ENCODE measurements at regions of chr14 and their contacts with region 1.

Region 1: GRCh38 chr14:51979088-51979709 is 10.1 kb upstream of the RTRAF start:
- DNase-seq: peak; percentile 80
- H3K4me3 Mint-ChIP-seq: no peak overlapping the region
- H3K27ac Mint-ChIP-seq: no peak overlapping the region
- H3K4me1 Mint-ChIP-seq: no peaks in the 10 kb centered on the region
- H3K27me3 Mint-ChIP-seq: peaks cover 29% of the 10 kb centered on the region
- CTCF ChIP-seq: peak; percentile 86

Region 2: GRCh38 chr14:51283402-51284085 is 695.7 kb before region 1 on chr14:
- CTCF ChIA-PET with region 1: interaction called, 29 read pairs
- POLR2A ChIA-PET with region 1: no interaction called
- intact Hi-C with region 1: loop called (anchors 1 kb)
- DNase-seq: peak; percentile 84
- H3K4me3 Mint-ChIP-seq: no peak overlapping the region
- H3K27ac Mint-ChIP-seq: no peak overlapping the region
- H3K4me1 Mint-ChIP-seq: peaks cover 12% of the 10 kb centered on the region
- H3K27me3 Mint-ChIP-seq: no peaks in the 10 kb centered on the region
- CTCF ChIP-seq: peak; percentile 80

Region 3: DNA sequence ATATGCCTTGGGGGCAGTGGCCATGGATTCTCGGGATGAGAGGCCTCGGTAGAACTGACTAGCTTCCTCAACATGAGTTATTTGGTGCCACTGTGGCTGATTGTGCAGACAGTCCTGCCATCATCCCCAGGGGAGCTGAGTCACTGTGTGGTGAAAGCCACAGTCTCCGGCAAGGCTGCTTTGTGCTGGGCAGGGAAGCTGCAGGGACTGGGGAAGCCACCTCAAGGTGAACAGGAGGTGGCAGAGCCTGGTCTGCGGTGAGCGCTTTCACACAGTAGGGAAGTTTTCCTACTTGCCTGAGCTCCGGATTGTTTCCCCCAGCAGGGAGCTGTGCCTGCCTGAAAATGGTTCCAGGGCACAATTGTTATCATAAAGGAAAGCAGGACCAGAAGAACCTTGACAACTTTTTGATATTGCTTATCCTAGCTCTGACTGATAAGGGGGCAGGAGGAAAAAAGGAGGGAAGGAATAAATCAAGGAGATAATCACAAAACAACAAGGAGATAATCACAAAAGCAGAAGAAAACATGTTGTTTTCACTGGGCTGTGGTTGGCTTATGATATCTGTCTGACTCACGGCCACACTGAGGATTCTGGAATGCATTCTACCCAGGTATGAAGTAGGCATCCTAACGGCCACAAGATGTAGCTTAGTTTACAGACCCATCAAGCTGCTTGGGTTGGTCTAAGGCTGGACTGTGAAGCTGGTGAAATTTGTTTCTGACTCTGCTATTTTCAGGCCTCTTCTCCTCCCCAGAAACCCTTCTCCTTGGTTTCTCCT is 151.0 kb before region 1 on chr14:
- CTCF ChIA-PET with region 1: interaction called, 17 read pairs
- POLR2A ChIA-PET with region 1: no interaction called
- intact Hi-C with region 1: loop called (anchors 2 kb)
- DNase-seq: peak; percentile 72
- H3K4me3 Mint-ChIP-seq: no peak overlapping the region
- H3K27ac Mint-ChIP-seq: no peak overlapping the region
- H3K4me1 Mint-ChIP-seq: peaks cover 6% of the 10 kb centered on the region
- H3K27me3 Mint-ChIP-seq: no peaks in the 10 kb centered on the region
- CTCF ChIP-seq: no peak

Region 4: GRCh38 chr14:51951656-51952055 is 27.5 kb before region 1 on chr14:
- CTCF ChIA-PET with region 1: interaction called, 11 read pairs
- POLR2A ChIA-PET with region 1: no interaction called
- intact Hi-C with region 1: no loop called
- DNase-seq: no peak
- H3K4me3 Mint-ChIP-seq: no peak overlapping the region
- H3K27ac Mint-ChIP-seq: no peak overlapping the region
- H3K4me1 Mint-ChIP-seq: no peaks in the 10 kb centered on the region
- H3K27me3 Mint-ChIP-seq: peaks cover 13% of the 10 kb centered on the region
- CTCF ChIP-seq: no peak

Region 5: DNA sequence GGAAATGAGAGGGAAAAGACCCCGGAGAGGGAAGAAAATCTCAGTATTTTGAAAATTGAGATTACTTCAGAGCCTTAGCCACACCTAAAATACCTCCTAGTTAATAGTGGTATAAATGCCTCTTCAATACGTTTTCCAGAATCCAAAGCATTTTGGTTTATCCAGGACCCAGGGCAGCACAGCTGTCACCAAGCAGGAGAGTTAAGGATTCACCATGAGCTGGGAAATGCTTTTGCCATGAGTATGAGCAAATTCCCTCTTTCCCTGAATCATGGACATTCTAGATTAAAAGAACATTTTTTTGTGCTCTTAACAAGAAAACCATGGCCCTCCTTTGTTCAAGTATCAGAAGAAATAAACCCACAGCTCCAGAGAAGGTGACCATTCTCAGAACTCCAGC is 11.7 kb before region 1 on chr14:
- CTCF ChIA-PET with region 1: interaction called, 40 read pairs
- POLR2A ChIA-PET with region 1: interaction called, 3 read pairs
- intact Hi-C with region 1: no loop called
- DNase-seq: no peak
- H3K4me3 Mint-ChIP-seq: no peak overlapping the region
- H3K27ac Mint-ChIP-seq: no peak overlapping the region
- H3K4me1 Mint-ChIP-seq: peaks cover 10% of the 10 kb centered on the region
- H3K27me3 Mint-ChIP-seq: no peaks in the 10 kb centered on the region
- CTCF ChIP-seq: no peak

Measured in MCF 10A (cell line).